Right ventricle myocardium inferior (tissue), 1 donor: ENCODE measurements at regions of chr4 and their contacts with region 1.

Region 1: GRCh38 chr4:173669460-173670179 is 139.6 kb upstream of the HAND2 start:
- DNase-seq: no peak
- ATAC-seq: peak; percentile 97

Region 2: GRCh38 chr4:173746424-173746823 is 76.8 kb after region 1 on chr4:
- intact Hi-C with region 1: loop called (anchors 1 kb)
- DNase-seq: no peak
- ATAC-seq: peak; percentile 61